Sciatic nerve (tissue), 2 donors: ENCODE measurements at regions of chr1 and their contacts with region 1.

Region 1: DNA sequence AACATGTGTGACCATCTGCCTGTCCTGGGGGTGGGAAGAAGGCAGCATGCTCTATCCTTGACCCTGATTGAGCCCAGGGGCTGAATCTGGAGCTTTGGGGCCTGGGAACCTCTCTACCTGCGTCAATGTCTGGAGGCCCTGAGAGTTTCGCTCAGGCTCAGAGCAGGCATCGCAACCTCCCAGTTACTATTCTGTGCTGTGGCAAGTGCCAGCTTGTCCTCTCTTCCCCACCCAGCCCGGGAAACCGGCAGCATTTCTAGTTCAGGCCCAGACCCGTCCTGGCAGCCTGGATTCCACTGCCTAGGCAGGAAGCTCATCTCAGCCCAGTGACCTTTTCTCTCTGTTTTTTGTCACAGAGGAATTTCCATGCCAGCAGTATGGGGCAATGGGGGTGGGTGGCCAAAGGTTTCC is 10.0 kb upstream of the IRF6 start:
- DNase-seq: no peak
- ATAC-seq: no peak

Region 2: DNA sequence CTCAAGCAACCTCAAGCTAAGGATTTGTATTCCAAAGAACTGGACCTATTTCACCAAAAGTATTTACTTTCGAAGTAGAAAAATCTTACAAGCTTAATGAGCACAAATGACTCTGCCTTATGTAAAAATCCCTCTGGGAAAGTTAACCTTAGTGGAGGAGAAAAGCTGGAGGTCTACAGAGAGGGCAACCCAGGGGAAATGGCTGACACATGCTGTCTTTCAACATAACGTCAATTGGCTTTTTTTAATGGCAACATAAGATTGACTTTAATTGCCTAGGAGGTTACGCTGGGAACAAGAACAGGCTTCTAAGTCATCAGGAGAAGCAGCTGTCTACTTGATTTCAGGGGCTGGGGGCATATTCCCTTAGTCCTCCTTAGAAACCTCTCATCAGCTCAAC is 64.1 kb after region 1 on chr1:
- intact Hi-C with region 1: loop called (anchors 2 kb)
- DNase-seq: no peak
- ATAC-seq: no peak